Mammary epithelial cell (primary cell): ENCODE measurements at regions of chr6 and their contacts with region 1.

Region 1: GRCh38 chr6:34526992-34527728 is 29.0 kb downstream of the SPDEF start:
- DNase-seq: peak; percentile 82
- H3K4me3 ChIP-seq: peak overlapping the region in 2 of 3 experiments; percentile 13 to 30
- H3K27ac ChIP-seq: peak overlapping the region; percentile 19
- H3K4me1 ChIP-seq: peaks cover 9% of the 10 kb centered on the region
- H3K27me3 ChIP-seq: no peaks in the 10 kb centered on the region
- CTCF ChIP-seq: peak; percentile 38 to 70

Region 2: GRCh38 chr6:34447910-34448309 is 79.2 kb before region 1 on chr6:
- CTCF ChIA-PET with region 1: no interaction called
- dilution Hi-C with region 1: loop called (anchors 5 kb)
- in situ Hi-C with region 1: no loop called
- intact Hi-C with region 1: no loop called
- DNase-seq: no peak
- H3K4me3 ChIP-seq: no peak overlapping the region
- H3K27ac ChIP-seq: no peak overlapping the region
- H3K4me1 ChIP-seq: no peaks in the 10 kb centered on the region
- H3K27me3 ChIP-seq: no peaks in the 10 kb centered on the region
- CTCF ChIP-seq: no peak

Region 3: DNA sequence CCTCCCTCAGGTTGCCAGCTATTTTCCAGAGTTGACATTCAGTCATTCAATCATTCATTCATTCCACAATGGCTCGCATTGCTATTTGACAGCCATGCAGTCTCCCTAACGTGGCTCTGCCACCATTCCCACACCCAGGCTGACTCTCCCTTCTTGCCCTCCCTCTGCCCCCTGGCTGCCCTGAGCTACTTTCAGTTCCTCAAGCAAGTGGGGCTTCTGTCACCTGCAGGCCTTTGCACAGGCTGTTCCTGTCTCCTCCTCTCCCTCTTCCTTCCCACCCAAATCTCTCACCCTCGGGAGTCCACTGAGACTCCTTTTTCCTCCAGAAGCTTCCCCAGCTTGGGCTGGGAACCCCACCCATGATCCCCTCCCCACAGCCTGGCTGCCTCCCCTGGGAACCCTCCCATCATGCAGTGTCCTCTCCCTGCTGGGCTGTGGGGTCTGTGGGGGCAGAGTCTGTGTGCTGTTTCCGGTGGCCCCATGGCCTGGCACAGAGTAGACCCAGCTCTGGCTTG is 58.7 kb before region 1 on chr6:
- CTCF ChIA-PET with region 1: no interaction called
- dilution Hi-C with region 1: no loop called
- in situ Hi-C with region 1: no loop called
- intact Hi-C with region 1: no loop called
- DNase-seq: no peak
- H3K4me3 ChIP-seq: no peak overlapping the region
- H3K27ac ChIP-seq: no peak overlapping the region
- H3K4me1 ChIP-seq: peaks cover 4% of the 10 kb centered on the region
- H3K27me3 ChIP-seq: peaks cover 8% of the 10 kb centered on the region
- CTCF ChIP-seq: no peak

Region 4: GRCh38 chr6:34565722-34566137 is 38.6 kb after region 1 on chr6:
- CTCF ChIA-PET with region 1: no interaction called
- dilution Hi-C with region 1: loop called (anchors 5 kb)
- in situ Hi-C with region 1: no loop called
- intact Hi-C with region 1: no loop called
- DNase-seq: no peak
- H3K4me3 ChIP-seq: no peak overlapping the region
- H3K27ac ChIP-seq: no peak overlapping the region
- H3K4me1 ChIP-seq: no peaks in the 10 kb centered on the region
- H3K27me3 ChIP-seq: no peaks in the 10 kb centered on the region
- CTCF ChIP-seq: no peak

Region 5: DNA sequence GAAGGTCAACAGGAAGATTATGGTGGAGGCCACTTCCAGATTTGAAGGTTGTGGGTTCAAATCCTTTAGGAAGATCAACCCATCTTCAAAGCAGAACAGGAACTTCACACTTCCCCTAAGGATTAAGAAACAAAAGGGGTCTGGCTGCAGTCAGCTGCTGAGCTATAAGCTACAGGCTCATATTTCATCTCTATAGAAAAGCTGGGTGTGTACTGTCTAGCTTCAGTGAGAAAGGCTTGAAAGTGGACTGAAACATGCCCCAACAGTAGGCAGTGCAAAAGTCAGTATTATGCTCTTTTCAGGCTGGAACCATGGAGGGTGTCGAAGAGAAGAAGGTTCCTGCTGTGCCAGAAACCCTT is 89.0 kb after region 1 on chr6:
- CTCF ChIA-PET with region 1: no interaction called
- dilution Hi-C with region 1: loop called (anchors 5 kb)
- in situ Hi-C with region 1: no loop called
- intact Hi-C with region 1: no loop called
- DNase-seq: no peak
- H3K4me3 ChIP-seq: no peak overlapping the region
- H3K27ac ChIP-seq: no peak overlapping the region
- H3K4me1 ChIP-seq: no peaks in the 10 kb centered on the region
- H3K27me3 ChIP-seq: no peaks in the 10 kb centered on the region
- CTCF ChIP-seq: no peak